ENCODE measurements at regions of chr2 and their contacts with region 1.

Region 1: GRCh38 chr2:215430528-215431187 is 5.2 kb downstream of the FN1 start:
- DNase-seq: peak; percentile 59
- H3K4me3 ChIP-seq: peak overlapping the region; percentile 91
- CTCF ChIP-seq: no peak

Region 2: DNA sequence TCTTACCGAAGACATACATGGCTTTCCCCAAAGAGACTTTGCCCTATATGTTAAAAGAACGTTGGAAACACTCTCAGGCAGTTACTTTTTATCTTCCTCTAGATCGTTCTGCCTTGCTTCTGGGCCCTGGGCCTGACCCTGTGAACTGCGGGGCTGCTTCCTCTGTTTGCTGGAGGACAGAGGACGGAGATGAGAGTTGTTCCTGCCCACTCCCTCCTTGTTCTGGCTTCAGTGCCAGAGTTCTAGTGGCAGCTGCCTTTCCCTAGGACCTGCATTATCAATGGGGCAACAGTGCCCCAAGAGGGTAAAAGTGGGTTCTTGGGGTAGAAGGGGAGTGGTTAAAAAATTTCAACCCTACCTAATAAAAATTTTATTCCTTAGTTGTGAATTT is 11.7 kb after region 1 on chr2:
- CTCF ChIA-PET with region 1: no interaction called
- POLR2A ChIA-PET with region 1: no interaction called
- DNase-seq: no peak
- H3K4me3 ChIP-seq: no peak overlapping the region
- CTCF ChIP-seq: no peak

Region 3: GRCh38 chr2:215528555-215528954 is 97.9 kb after region 1 on chr2:
- CTCF ChIA-PET with region 1: interaction called, 3 read pairs
- POLR2A ChIA-PET with region 1: interaction called, 32 read pairs
- DNase-seq: peak; percentile 98
- H3K4me3 ChIP-seq: no peak overlapping the region
- CTCF ChIP-seq: no peak